Pancreas (tissue), 10 donors: ENCODE measurements at regions of chr3 and their contacts with region 1.

Region 1: DNA sequence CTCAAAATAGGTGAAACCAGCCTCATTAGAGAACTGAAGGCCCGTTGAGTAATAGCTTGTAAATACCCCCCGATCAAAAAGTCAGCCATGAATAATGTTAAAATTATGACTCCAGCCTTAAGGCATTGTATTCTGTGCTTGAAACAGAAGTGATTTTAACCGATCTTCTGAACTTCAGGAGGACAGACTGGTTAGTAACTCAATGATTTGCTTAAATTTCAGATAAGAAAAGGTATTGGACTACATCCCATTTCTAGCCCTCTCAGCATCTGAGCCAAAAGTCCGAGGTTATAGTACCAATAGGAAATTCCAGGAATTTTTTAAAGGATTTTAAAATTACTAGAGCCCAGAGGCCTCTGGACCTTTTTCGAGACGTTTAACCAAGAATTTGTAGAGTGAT is 67.7 kb upstream of the FGF12 start:
- DNase-seq: no peak
- ATAC-seq: no peak
- H3K4me3 ChIP-seq: no peak overlapping the region
- H3K27ac ChIP-seq: no peak overlapping the region
- H3K4me1 ChIP-seq: no peaks in the 10 kb centered on the region
- H3K27me3 ChIP-seq: no peaks in the 10 kb centered on the region
- CTCF ChIP-seq: no peak

Region 2: GRCh38 chr3:192467230-192468140 is 327.5 kb before region 1 on chr3:
- intact Hi-C with region 1: loop called in 2 of 3 experiments (anchors 10 kb)
- DNase-seq: peak in 5 of 6 donors; percentile 36 to 70 (median 52)
- ATAC-seq: peak; percentile 85 to 100 (median 98)
- H3K4me3 ChIP-seq: no peak overlapping the region
- H3K27ac ChIP-seq: no peak overlapping the region
- H3K4me1 ChIP-seq: no peaks in the 10 kb centered on the region
- H3K27me3 ChIP-seq: no peaks in the 10 kb centered on the region
- CTCF ChIP-seq: peak; percentile 75 to 87 (median 86)

Region 3: GRCh38 chr3:192566706-192567290 is 228.2 kb before region 1 on chr3:
- intact Hi-C with region 1: loop called in 2 of 3 experiments (anchors 5 kb)
- DNase-seq: peak; percentile 39 to 77 (median 59)
- ATAC-seq: peak; percentile 80 to 96 (median 92)
- H3K4me3 ChIP-seq: no peak overlapping the region
- H3K27ac ChIP-seq: no peak overlapping the region
- H3K4me1 ChIP-seq: peaks cover 0 to 3% (median 0%) of the 10 kb centered on the region in 3 donors
- H3K27me3 ChIP-seq: peaks cover 0 to 5% (median 0%) of the 10 kb centered on the region in 4 donors
- CTCF ChIP-seq: peak in 3 of 4 donors; percentile 63 to 67 (median 64)